ENCODE measurements at regions of chr2 and their contacts with region 1.

Region 1: GRCh38 chr2:65264821-65265670 is 37.4 kb downstream of the ACTR2 start:
- DNase-seq: no peak
- H3K4me3 ChIP-seq: no peak overlapping the region
- H3K27ac ChIP-seq: no peak overlapping the region
- H3K4me1 ChIP-seq: peaks cover 0 to 16% (median 0%) of the 10 kb centered on the region in 3 donors
- H3K27me3 ChIP-seq: no peaks in the 10 kb centered on the region
- CTCF ChIP-seq: peak; percentile 38 to 81 (median 69)
- POLR2A ChIP-seq: no peak

Region 2: GRCh38 chr2:65142515-65142914 is 122.5 kb before region 1 on chr2:
- intact Hi-C with region 1: no loop called
- DNase-seq: no peak
- H3K4me3 ChIP-seq: no peak overlapping the region
- H3K27ac ChIP-seq: no peak overlapping the region
- H3K4me1 ChIP-seq: no peaks in the 10 kb centered on the region
- H3K27me3 ChIP-seq: no peaks in the 10 kb centered on the region
- CTCF ChIP-seq: peak in 2 of 6 experiments; percentile 30 to 45
- POLR2A ChIP-seq: no peak

Region 3: GRCh38 chr2:65554765-65555591 is 289.9 kb after region 1 on chr2:
- intact Hi-C with region 1: loop called (anchors 5 kb)
- DNase-seq: no peak
- H3K4me3 ChIP-seq: no peak overlapping the region
- H3K27ac ChIP-seq: no peak overlapping the region
- H3K4me1 ChIP-seq: peaks cover 0 to 9% (median 2%) of the 10 kb centered on the region in 3 donors
- H3K27me3 ChIP-seq: peaks cover 0 to 3% (median 0%) of the 10 kb centered on the region in 4 donors
- CTCF ChIP-seq: no peak
- POLR2A ChIP-seq: no peak